GM12878 (cell line): ENCODE measurements at regions of chr12 and their contacts with region 1.

Region 1: GRCh38 chr12:26701604-26702215 is 131.3 kb downstream of the ITPR2 start:
- DNase-seq: no peak
- ATAC-seq: peak; percentile 78
- H3K4me3 ChIP-seq: no peak overlapping the region
- H3K27ac ChIP-seq: no peak overlapping the region
- H3K4me1 ChIP-seq: no peaks in the 10 kb centered on the region
- H3K27me3 ChIP-seq: no peaks in the 10 kb centered on the region
- CTCF ChIP-seq: peak; percentile 14 to 53 (median 28); a peak in 3 of 6 replicates
- EP300 ChIP-seq: no peak
- POLR2A ChIP-seq: no peak
- RAD21 ChIP-seq: peak; percentile 56

Region 2: GRCh38 chr12:25614813-25615518 is 1086.7 kb before region 1 on chr12:
- CTCF ChIA-PET with region 1: no interaction called
- POLR2A ChIA-PET with region 1: no interaction called
- RAD21 ChIA-PET with region 1: no interaction called
- SMC1A ChIA-PET with region 1: no interaction called
- in situ Hi-C with region 1: no loop called
- intact Hi-C with region 1: no loop called
- DNase-seq: no peak
- ATAC-seq: no peak
- H3K4me3 ChIP-seq: no peak overlapping the region
- H3K27ac ChIP-seq: no peak overlapping the region
- H3K4me1 ChIP-seq: no peaks in the 10 kb centered on the region
- H3K27me3 ChIP-seq: no peaks in the 10 kb centered on the region
- CTCF ChIP-seq: no peak
- EP300 ChIP-seq: no peak
- POLR2A ChIP-seq: no peak
- RAD21 ChIP-seq: no peak

Region 3: GRCh38 chr12:26651566-26652188 is 50.0 kb before region 1 on chr12:
- CTCF ChIA-PET with region 1: interaction called, 5 read pairs
- POLR2A ChIA-PET with region 1: no interaction called
- RAD21 ChIA-PET with region 1: interaction called, 4 read pairs
- SMC1A ChIA-PET with region 1: interaction called, 10 read pairs
- in situ Hi-C with region 1: no loop called
- intact Hi-C with region 1: no loop called
- DNase-seq: peak; percentile 21
- ATAC-seq: peak; percentile 84
- H3K4me3 ChIP-seq: no peak overlapping the region
- H3K27ac ChIP-seq: no peak overlapping the region
- H3K4me1 ChIP-seq: no peaks in the 10 kb centered on the region
- H3K27me3 ChIP-seq: no peaks in the 10 kb centered on the region
- CTCF ChIP-seq: peak; percentile 55 to 75 (median 73)
- EP300 ChIP-seq: no peak
- POLR2A ChIP-seq: no peak
- RAD21 ChIP-seq: peak; percentile 59

Region 4: GRCh38 chr12:26680727-26681455 is 20.8 kb before region 1 on chr12:
- CTCF ChIA-PET with region 1: interaction called, 15 read pairs
- POLR2A ChIA-PET with region 1: no interaction called
- RAD21 ChIA-PET with region 1: interaction called, 3 read pairs
- SMC1A ChIA-PET with region 1: interaction called, 6 read pairs
- in situ Hi-C with region 1: no loop called
- intact Hi-C with region 1: no loop called
- DNase-seq: no peak
- ATAC-seq: no peak
- H3K4me3 ChIP-seq: no peak overlapping the region
- H3K27ac ChIP-seq: no peak overlapping the region
- H3K4me1 ChIP-seq: no peaks in the 10 kb centered on the region
- H3K27me3 ChIP-seq: no peaks in the 10 kb centered on the region
- CTCF ChIP-seq: no peak
- EP300 ChIP-seq: no peak
- POLR2A ChIP-seq: no peak
- RAD21 ChIP-seq: no peak

Region 5: DNA sequence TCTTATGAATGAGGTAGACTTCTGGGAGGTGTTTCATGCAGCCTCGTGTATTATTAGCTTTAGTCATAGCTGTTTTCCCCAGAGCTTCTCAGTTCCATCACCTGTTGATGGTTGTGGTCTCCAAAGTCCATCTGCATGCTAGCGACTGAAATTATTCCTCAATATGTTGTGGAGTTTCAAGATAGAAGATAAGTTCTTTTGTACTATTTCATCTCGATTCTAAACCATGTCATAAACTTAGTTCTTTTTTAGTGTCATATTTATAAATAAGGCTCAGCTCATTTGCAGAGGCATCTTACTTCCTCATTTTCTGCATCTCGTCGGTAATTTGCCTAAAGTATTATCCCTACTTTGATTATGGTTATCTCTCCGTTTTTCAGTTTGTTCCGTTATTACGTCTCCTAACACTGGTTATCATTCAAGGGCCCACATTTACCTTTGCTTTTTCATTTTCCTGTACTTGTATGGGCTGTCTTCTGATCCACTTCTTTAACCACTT is 12.2 kb after region 1 on chr12:
- CTCF ChIA-PET with region 1: interaction called, 24 read pairs
- POLR2A ChIA-PET with region 1: no interaction called
- RAD21 ChIA-PET with region 1: interaction called, 11 read pairs
- SMC1A ChIA-PET with region 1: interaction called, 7 read pairs
- in situ Hi-C with region 1: no loop called
- intact Hi-C with region 1: no loop called
- DNase-seq: peak; percentile 48
- ATAC-seq: peak; percentile 87
- H3K4me3 ChIP-seq: no peak overlapping the region
- H3K27ac ChIP-seq: peak overlapping the region; percentile 69
- H3K4me1 ChIP-seq: peaks cover 22% of the 10 kb centered on the region
- H3K27me3 ChIP-seq: no peaks in the 10 kb centered on the region
- CTCF ChIP-seq: no peak
- EP300 ChIP-seq: peak in 1 of 2 experiments; percentile 74; a peak in 2 of 4 replicates
- POLR2A ChIP-seq: no peak
- RAD21 ChIP-seq: no peak

Region 6: GRCh38 chr12:26723379-26724308 is 21.9 kb after region 1 on chr12:
- CTCF ChIA-PET with region 1: interaction called, 17 read pairs
- POLR2A ChIA-PET with region 1: interaction called, 3 read pairs
- RAD21 ChIA-PET with region 1: interaction called, 11 read pairs
- SMC1A ChIA-PET with region 1: interaction called, 6 read pairs
- in situ Hi-C with region 1: no loop called
- intact Hi-C with region 1: no loop called
- DNase-seq: no peak
- ATAC-seq: peak; percentile 43
- H3K4me3 ChIP-seq: no peak overlapping the region
- H3K27ac ChIP-seq: no peak overlapping the region
- H3K4me1 ChIP-seq: peaks cover 34% of the 10 kb centered on the region
- H3K27me3 ChIP-seq: no peaks in the 10 kb centered on the region
- CTCF ChIP-seq: no peak
- EP300 ChIP-seq: peak in 1 of 2 experiments; percentile 33; a peak in 1 of 4 replicates
- POLR2A ChIP-seq: no peak
- RAD21 ChIP-seq: no peak

Region 7: GRCh38 chr12:26845057-26845666 is 143.5 kb after region 1 on chr12:
- CTCF ChIA-PET with region 1: interaction called, 20 read pairs
- POLR2A ChIA-PET with region 1: no interaction called
- RAD21 ChIA-PET with region 1: interaction called, 7 read pairs
- SMC1A ChIA-PET with region 1: interaction called, 3 read pairs
- in situ Hi-C with region 1: no loop called
- intact Hi-C with region 1: no loop called
- DNase-seq: no peak
- ATAC-seq: peak; percentile 43; the same call in 2 of the 3 replicates
- H3K4me3 ChIP-seq: no peak overlapping the region
- H3K27ac ChIP-seq: no peak overlapping the region
- H3K4me1 ChIP-seq: peaks cover 10% of the 10 kb centered on the region
- H3K27me3 ChIP-seq: no peaks in the 10 kb centered on the region
- CTCF ChIP-seq: peak; percentile 38 to 59 (median 56)
- EP300 ChIP-seq: no peak
- POLR2A ChIP-seq: no peak
- RAD21 ChIP-seq: peak; percentile 58

Region 8: GRCh38 chr12:26921886-26922285 is 220.2 kb after region 1 on chr12:
- CTCF ChIA-PET with region 1: no interaction called
- POLR2A ChIA-PET with region 1: no interaction called
- RAD21 ChIA-PET with region 1: no interaction called
- SMC1A ChIA-PET with region 1: no interaction called
- in situ Hi-C with region 1: no loop called
- intact Hi-C with region 1: no loop called
- DNase-seq: no peak
- ATAC-seq: no peak
- H3K4me3 ChIP-seq: no peak overlapping the region
- H3K27ac ChIP-seq: no peak overlapping the region
- H3K4me1 ChIP-seq: no peaks in the 10 kb centered on the region
- H3K27me3 ChIP-seq: no peaks in the 10 kb centered on the region
- CTCF ChIP-seq: no peak
- EP300 ChIP-seq: no peak
- POLR2A ChIP-seq: no peak
- RAD21 ChIP-seq: no peak